ENCODE measurements at regions of chr1 and their contacts with region 1.

Region 1: GRCh38 chr1:54488779-54489626 is 59.0 kb upstream of the ACOT11 start:
- DNase-seq: peak; percentile 84
- H3K4me3 ChIP-seq: peak overlapping the region; percentile 61
- H3K27ac ChIP-seq: peak overlapping the region; percentile 86
- H3K4me1 ChIP-seq: peaks cover 5% of the 10 kb centered on the region
- H3K27me3 ChIP-seq: no peaks in the 10 kb centered on the region
- CTCF ChIP-seq: peak; percentile 98

Region 2: GRCh38 chr1:54070171-54070837 is 418.7 kb before region 1 on chr1:
- intact Hi-C with region 1: loop called (anchors 5 kb)
- DNase-seq: no peak
- H3K4me3 ChIP-seq: no peak overlapping the region
- H3K27ac ChIP-seq: no peak overlapping the region
- H3K4me1 ChIP-seq: no peaks in the 10 kb centered on the region
- H3K27me3 ChIP-seq: no peaks in the 10 kb centered on the region
- CTCF ChIP-seq: peak; percentile 65

Region 3: GRCh38 chr1:54110996-54111395 is 378.0 kb before region 1 on chr1:
- intact Hi-C with region 1: no loop called
- DNase-seq: no peak
- H3K4me3 ChIP-seq: no peak overlapping the region
- H3K27ac ChIP-seq: no peak overlapping the region
- H3K4me1 ChIP-seq: no peaks in the 10 kb centered on the region
- H3K27me3 ChIP-seq: no peaks in the 10 kb centered on the region
- CTCF ChIP-seq: no peak

Region 4: GRCh38 chr1:54121482-54122134 is 367.4 kb before region 1 on chr1:
- intact Hi-C with region 1: loop called (anchors 5 kb)
- DNase-seq: peak; percentile 89
- H3K4me3 ChIP-seq: peak overlapping the region; percentile 25
- H3K27ac ChIP-seq: no peak overlapping the region
- H3K4me1 ChIP-seq: peaks cover 4% of the 10 kb centered on the region
- H3K27me3 ChIP-seq: no peaks in the 10 kb centered on the region
- CTCF ChIP-seq: peak; percentile 72

Region 5: GRCh38 chr1:54249819-54250435 is 239.1 kb before region 1 on chr1:
- intact Hi-C with region 1: no loop called
- DNase-seq: no peak
- H3K4me3 ChIP-seq: no peak overlapping the region
- H3K27ac ChIP-seq: no peak overlapping the region
- H3K4me1 ChIP-seq: no peaks in the 10 kb centered on the region
- H3K27me3 ChIP-seq: no peaks in the 10 kb centered on the region
- CTCF ChIP-seq: no peak

Region 6: GRCh38 chr1:54406339-54407153 is 82.5 kb before region 1 on chr1 and contains the start of gene SSBP3:
- intact Hi-C with region 1: loop called (anchors 1 kb)
- DNase-seq: peak; percentile 90
- H3K4me3 ChIP-seq: peak within 1 kb of the TSS; percentile 92
- H3K27ac ChIP-seq: peak within 1 kb of the TSS; percentile 93
- H3K4me1 ChIP-seq: peaks cover 17% of the 10 kb centered on the region
- H3K27me3 ChIP-seq: no peaks in the 10 kb centered on the region
- CTCF ChIP-seq: no peak
- total RNA-seq, gene SSBP3: 63.8 to 76.5 TPM

Region 7: DNA sequence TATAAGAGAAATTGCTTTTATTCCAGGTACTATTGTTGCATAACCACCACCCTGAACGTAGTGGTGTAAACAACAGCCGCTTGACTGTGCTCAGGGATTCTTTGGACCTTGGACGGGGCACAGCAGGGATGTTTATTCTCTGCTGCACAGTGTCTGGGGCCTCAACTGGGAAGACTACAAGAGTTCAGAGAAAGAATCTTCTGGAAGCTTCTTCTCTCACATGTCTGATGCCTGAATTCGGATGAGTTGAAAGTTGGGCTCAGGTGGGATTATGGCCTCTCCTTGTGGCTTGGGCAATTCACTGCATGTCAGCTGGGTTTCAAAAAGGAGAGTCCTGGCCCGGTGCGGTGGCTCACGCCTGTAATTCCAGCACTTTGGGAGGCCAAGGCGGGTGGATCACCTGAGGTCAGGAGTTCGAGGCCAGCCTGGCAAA is 63.8 kb before region 1 on chr1:
- intact Hi-C with region 1: no loop called
- DNase-seq: peak; percentile 71
- H3K4me3 ChIP-seq: no peak overlapping the region
- H3K27ac ChIP-seq: peak overlapping the region; percentile 17
- H3K4me1 ChIP-seq: no peaks in the 10 kb centered on the region
- H3K27me3 ChIP-seq: no peaks in the 10 kb centered on the region
- CTCF ChIP-seq: no peak

Region 8: GRCh38 chr1:54791880-54792522 is 303.0 kb after region 1 on chr1:
- intact Hi-C with region 1: no loop called
- DNase-seq: peak; percentile 68
- H3K4me3 ChIP-seq: no peak overlapping the region
- H3K27ac ChIP-seq: no peak overlapping the region
- H3K4me1 ChIP-seq: peaks cover 26% of the 10 kb centered on the region
- H3K27me3 ChIP-seq: no peaks in the 10 kb centered on the region
- CTCF ChIP-seq: peak; percentile 56